ENCODE measurements at regions of chr17 and their contacts with region 1.

Region 1: GRCh38 chr17:28902819-28903545 is at the start of gene DHRS13:
- DNase-seq: peak; percentile 88 to 93 (median 89)
- H3K4me3 ChIP-seq: peak within 1 kb of the TSS; percentile 53 to 88 (median 63)
- H3K4me3 Mint-ChIP-seq: peak within 1 kb of the TSS; percentile 90 to 96
- H3K27ac ChIP-seq: peak within 1 kb of the TSS in 1 of 2 donors; percentile 67
- H3K27ac Mint-ChIP-seq: peak within 1 kb of the TSS; percentile 56 to 79 (median 64)
- H3K4me1 ChIP-seq: peaks cover 22 to 31% of the 10 kb centered on the region in 2 donors
- H3K4me1 Mint-ChIP-seq: peaks cover 26% of the 10 kb centered on the region
- H3K27me3 ChIP-seq: no peaks in the 10 kb centered on the region
- H3K27me3 Mint-ChIP-seq: peaks cover 1 to 10% (median 2%) of the 10 kb centered on the region in 3 donors
- CTCF ChIP-seq: peak; percentile 99
- polyA plus RNA-seq, gene DHRS13: 3.7 to 4.5 (median 3.8) TPM

Region 2: GRCh38 chr17:29111816-29112499 is 209.0 kb after region 1 on chr17:
- intact Hi-C with region 1: loop called in 1 of 2 experiments (anchors 10 kb)
- DNase-seq: peak; percentile 34 to 51 (median 48)
- H3K4me3 ChIP-seq: no peak overlapping the region
- H3K4me3 Mint-ChIP-seq: no peak overlapping the region
- H3K27ac ChIP-seq: peak overlapping the region in 1 of 2 donors; percentile 15
- H3K27ac Mint-ChIP-seq: peak overlapping the region in 2 of 7 donors; percentile 26 to 35
- H3K4me1 ChIP-seq: peaks cover 19 to 41% of the 10 kb centered on the region in 2 donors
- H3K4me1 Mint-ChIP-seq: peaks cover 33% of the 10 kb centered on the region
- H3K27me3 ChIP-seq: no peaks in the 10 kb centered on the region
- H3K27me3 Mint-ChIP-seq: no peaks in the 10 kb centered on the region
- CTCF ChIP-seq: peak; percentile 79